B cell (primary cell): ENCODE measurements at regions of chr14 and their contacts with region 1.

Region 1: GRCh38 chr14:20343092-20343861 is at the start of gene PARP2:
- DNase-seq: peak; percentile 97
- ATAC-seq: peak; percentile 81
- H3K4me3 ChIP-seq: peak within 1 kb of the TSS; percentile 79 to 96 (median 88)
- H3K4me3 Mint-ChIP-seq: peak within 1 kb of the TSS; percentile 97
- H3K27ac ChIP-seq: peak within 1 kb of the TSS; percentile 85 to 93
- H3K27ac Mint-ChIP-seq: peak within 1 kb of the TSS; percentile 99
- H3K4me1 ChIP-seq: peaks cover 6 to 10% of the 10 kb centered on the region in 2 donors
- H3K4me1 Mint-ChIP-seq: peaks cover 15% of the 10 kb centered on the region
- H3K27me3 ChIP-seq: no peaks in the 10 kb centered on the region
- H3K27me3 Mint-ChIP-seq: no peaks in the 10 kb centered on the region
- CTCF ChIP-seq: peak; percentile 22
- total RNA-seq, gene PARP2: 17.4 and 22.4 TPM in 2 replicates

Region 2: DNA sequence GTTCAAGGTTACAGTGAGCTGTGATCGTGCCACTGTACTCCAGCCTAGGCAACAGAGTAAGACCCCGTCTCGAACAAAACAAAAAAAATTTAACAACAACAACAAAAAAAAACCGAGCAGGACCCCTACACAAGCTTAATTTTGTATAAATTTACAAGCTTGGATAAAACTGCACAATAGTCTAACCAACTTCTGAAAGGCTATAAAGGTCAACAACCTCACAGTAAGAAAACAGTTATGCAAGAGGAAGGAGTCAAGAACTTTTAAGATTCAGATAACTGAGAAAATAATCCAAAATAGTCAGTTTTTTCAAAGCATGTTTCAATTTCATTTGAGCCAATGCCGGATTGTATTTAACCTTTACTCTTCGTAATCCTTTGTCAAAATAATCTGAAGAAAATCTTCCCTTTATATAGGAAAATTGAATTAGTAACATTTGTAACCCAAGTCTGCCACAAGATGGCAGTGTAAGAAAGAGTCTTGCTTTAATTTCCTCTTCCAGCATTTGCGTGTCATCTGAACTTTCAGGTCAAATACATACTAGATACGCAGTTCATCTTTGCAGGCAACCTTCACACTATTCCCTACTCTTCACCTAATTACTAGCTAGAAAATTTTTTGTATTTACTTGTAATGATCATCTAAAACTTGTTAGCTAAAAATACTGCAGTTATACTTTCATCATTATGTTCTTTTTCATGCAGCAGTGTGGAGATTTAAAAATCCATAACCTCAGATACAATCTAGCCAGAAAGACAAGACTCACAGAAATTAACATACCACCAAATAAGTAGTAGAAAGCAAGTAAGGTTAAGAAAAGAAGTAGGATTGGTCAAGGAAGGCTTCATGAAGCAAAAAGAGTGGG is 16.0 kb before region 1 on chr14:
- CTCF ChIA-PET with region 1: interaction called, 88 read pairs
- POLR2A ChIA-PET with region 1: interaction called, 19 read pairs
- intact Hi-C with region 1: loop called (anchors 1 kb)
- DNase-seq: peak; percentile 81
- ATAC-seq: peak; percentile 67
- H3K4me3 ChIP-seq: no peak overlapping the region
- H3K4me3 Mint-ChIP-seq: peak overlapping the region; percentile 1
- H3K27ac ChIP-seq: no peak overlapping the region
- H3K27ac Mint-ChIP-seq: peak overlapping the region; percentile 33
- H3K4me1 ChIP-seq: peaks cover under 1 to 6% of the 10 kb centered on the region in 2 donors
- H3K4me1 Mint-ChIP-seq: peaks cover 30% of the 10 kb centered on the region
- H3K27me3 ChIP-seq: no peaks in the 10 kb centered on the region
- H3K27me3 Mint-ChIP-seq: no peaks in the 10 kb centered on the region
- CTCF ChIP-seq: peak; percentile 91

Region 3: GRCh38 chr14:20454516-20455354 is 111.5 kb after region 1 on chr14 and contains the starts of genes APEX1 and OSGEP:
- CTCF ChIA-PET with region 1: interaction called, 4 read pairs
- POLR2A ChIA-PET with region 1: interaction called, 15 read pairs
- intact Hi-C with region 1: loop called (anchors 1 kb)
- DNase-seq: peak; percentile 99
- ATAC-seq: peak; percentile 91
- H3K4me3 ChIP-seq: peak within 1 kb of the TSS; percentile 70 to 95 (median 92)
- H3K4me3 Mint-ChIP-seq: peak within 1 kb of the TSS; percentile 17
- H3K27ac ChIP-seq: peak within 1 kb of the TSS; percentile 87 to 97
- H3K27ac Mint-ChIP-seq: no peak within 1 kb of the TSS
- H3K4me1 ChIP-seq: peaks cover 21 to 54% of the 10 kb centered on the region in 2 donors
- H3K4me1 Mint-ChIP-seq: peaks cover 23% of the 10 kb centered on the region
- H3K27me3 ChIP-seq: no peaks in the 10 kb centered on the region
- H3K27me3 Mint-ChIP-seq: no peaks in the 10 kb centered on the region
- CTCF ChIP-seq: no peak
- total RNA-seq, gene APEX1: 103 and 111 TPM in 2 replicates
- total RNA-seq, gene OSGEP: 115 and 117 TPM in 2 replicates

Region 4: GRCh38 chr14:20469242-20469889 is 126.1 kb after region 1 on chr14 and contains the start of gene PNP:
- CTCF ChIA-PET with region 1: no interaction called
- POLR2A ChIA-PET with region 1: interaction called, 6 read pairs
- intact Hi-C with region 1: loop called (anchors 2 kb)
- DNase-seq: peak; percentile 92
- ATAC-seq: peak; percentile 93
- H3K4me3 ChIP-seq: peak within 1 kb of the TSS; percentile 88 to 99 (median 98)
- H3K4me3 Mint-ChIP-seq: peak within 1 kb of the TSS; percentile 100
- H3K27ac ChIP-seq: peak within 1 kb of the TSS; percentile 73 to 81
- H3K27ac Mint-ChIP-seq: peak within 1 kb of the TSS; percentile 96
- H3K4me1 ChIP-seq: peaks cover 31 to 33% of the 10 kb centered on the region in 2 donors
- H3K4me1 Mint-ChIP-seq: peaks cover 52% of the 10 kb centered on the region
- H3K27me3 ChIP-seq: no peaks in the 10 kb centered on the region
- H3K27me3 Mint-ChIP-seq: no peaks in the 10 kb centered on the region
- CTCF ChIP-seq: no peak
- total RNA-seq, gene PNP: 38.9 and 42.0 TPM in 2 replicates

Region 5: DNA sequence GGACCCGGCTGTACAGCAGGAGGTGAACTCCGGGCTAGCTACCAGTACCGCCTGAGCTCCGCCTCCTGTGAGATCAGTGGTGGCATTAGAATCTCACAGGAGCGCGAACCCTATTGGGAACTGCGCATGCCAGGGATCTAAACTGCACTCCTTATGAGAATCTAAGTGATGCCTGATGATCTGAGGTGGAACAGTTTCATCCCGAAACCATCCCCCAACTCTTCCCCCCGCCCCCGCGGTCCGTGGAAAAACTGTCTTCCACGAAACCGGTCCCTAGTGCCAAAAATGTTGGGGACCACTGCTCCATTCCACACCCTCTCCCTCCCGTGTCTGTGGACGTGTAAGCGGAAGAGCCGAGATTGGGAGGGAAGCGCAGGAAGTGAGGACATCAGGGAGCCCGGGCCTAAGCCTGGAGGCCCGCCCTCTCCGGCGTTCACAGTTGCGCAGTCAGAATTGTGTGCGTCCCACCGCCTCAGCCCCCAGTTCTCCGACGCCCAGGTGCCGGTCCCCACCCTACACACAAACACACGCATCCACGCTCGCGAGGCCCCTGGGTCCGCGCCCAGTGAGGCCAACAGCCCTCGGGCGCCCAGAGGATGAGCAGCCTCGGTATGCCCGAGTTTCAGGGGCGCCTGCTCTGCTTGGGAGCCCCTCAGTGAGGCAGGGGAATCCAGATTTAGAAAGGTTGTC is 339.3 kb after region 1 on chr14:
- CTCF ChIA-PET with region 1: interaction called, 10 read pairs
- POLR2A ChIA-PET with region 1: interaction called, 18 read pairs
- intact Hi-C with region 1: loop called (anchors 1 kb)
- DNase-seq: peak; percentile 88
- ATAC-seq: peak; percentile 57
- H3K4me3 ChIP-seq: peak overlapping the region; percentile 81 to 95 (median 92)
- H3K4me3 Mint-ChIP-seq: no peak overlapping the region
- H3K27ac ChIP-seq: peak overlapping the region; percentile 92 to 94
- H3K27ac Mint-ChIP-seq: no peak overlapping the region
- H3K4me1 ChIP-seq: peaks cover 31 to 48% of the 10 kb centered on the region in 2 donors
- H3K4me1 Mint-ChIP-seq: peaks cover 15% of the 10 kb centered on the region
- H3K27me3 ChIP-seq: no peaks in the 10 kb centered on the region
- H3K27me3 Mint-ChIP-seq: no peaks in the 10 kb centered on the region
- CTCF ChIP-seq: no peak